Caco-2 (cell line): ENCODE measurements at regions of chr1 and their contacts with region 1.

Region 1: DNA sequence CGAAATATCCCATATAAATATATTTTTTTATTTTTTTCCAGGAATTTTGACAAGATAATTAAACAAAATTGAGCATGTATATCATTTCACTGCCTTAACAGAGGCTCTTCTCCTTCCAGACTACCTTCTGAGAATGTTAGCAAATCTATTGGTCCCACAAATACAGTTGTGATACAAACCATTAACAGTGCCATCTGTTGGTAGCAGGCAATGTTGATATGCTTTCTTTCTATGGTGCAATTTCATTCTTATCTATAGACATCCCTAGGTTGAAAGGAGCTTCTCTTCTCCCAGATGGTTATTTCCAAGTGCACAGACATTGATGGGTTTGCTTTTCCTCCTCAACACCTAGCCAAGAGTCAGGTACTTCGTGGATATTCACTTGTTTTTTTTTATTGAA is 303.6 kb downstream of the USH2A start:
- DNase-seq: peak in 1 of 2 experiments; percentile 36
- H3K4me3 ChIP-seq: no peak overlapping the region
- H3K4me3 Mint-ChIP-seq: no peak overlapping the region
- H3K27ac Mint-ChIP-seq: no peak overlapping the region
- H3K4me1 ChIP-seq: no peaks in the 10 kb centered on the region
- H3K4me1 Mint-ChIP-seq: no peaks in the 10 kb centered on the region
- H3K27me3 ChIP-seq: no peaks in the 10 kb centered on the region
- H3K27me3 Mint-ChIP-seq: no peaks in the 10 kb centered on the region
- CTCF ChIP-seq: peak; percentile 53 to 61

Region 2: DNA sequence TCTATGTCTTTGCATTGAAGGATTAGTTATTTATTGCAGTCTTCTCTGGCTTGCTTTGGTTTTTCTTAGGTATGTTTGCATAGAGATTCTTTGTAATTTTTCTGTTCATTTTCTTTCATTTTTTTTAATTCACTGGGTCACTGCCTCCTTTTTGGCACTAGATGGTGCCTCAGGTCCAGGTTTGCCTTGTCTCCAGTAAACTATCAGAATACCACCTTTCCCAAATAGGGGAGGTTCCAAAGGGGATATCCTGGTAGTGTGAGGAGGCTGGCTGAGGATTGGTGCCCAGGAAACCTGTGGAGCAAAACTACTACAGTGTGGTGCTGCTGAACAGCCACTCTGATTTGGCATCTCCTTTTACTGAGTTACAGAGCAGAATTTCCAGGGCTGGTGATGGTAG is 295.4 kb before region 1 on chr1:
- CTCF ChIA-PET with region 1: no interaction called
- POLR2A ChIA-PET with region 1: interaction called, 3 read pairs
- intact Hi-C with region 1: loop called (anchors 1 kb)
- DNase-seq: peak in 1 of 2 experiments; percentile 24
- H3K4me3 ChIP-seq: no peak overlapping the region
- H3K4me3 Mint-ChIP-seq: no peak overlapping the region
- H3K27ac Mint-ChIP-seq: no peak overlapping the region
- H3K4me1 ChIP-seq: no peaks in the 10 kb centered on the region
- H3K4me1 Mint-ChIP-seq: no peaks in the 10 kb centered on the region
- H3K27me3 ChIP-seq: no peaks in the 10 kb centered on the region
- H3K27me3 Mint-ChIP-seq: no peaks in the 10 kb centered on the region
- CTCF ChIP-seq: peak; percentile 32 to 73

Region 3: DNA sequence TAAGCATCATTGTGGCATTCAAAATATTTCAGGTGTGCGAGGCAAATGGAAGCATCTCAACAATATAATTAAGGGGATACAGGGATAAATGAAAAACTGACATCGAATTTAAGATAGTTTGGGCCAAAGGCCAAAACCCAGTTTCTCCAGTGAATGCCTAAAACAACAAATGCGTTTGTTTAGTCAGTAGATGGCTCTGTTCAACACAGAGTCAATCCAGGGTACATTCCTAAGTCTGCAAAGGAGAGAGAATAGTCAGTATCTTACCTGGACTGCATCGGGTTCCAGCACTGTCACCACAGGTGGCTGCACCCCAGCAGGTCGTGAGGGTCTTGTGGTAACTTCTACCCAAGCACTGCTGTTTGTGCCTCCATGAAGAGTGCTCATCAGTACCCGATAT is 231.4 kb before region 1 on chr1:
- CTCF ChIA-PET with region 1: no interaction called
- POLR2A ChIA-PET with region 1: no interaction called
- intact Hi-C with region 1: loop called (anchors 1 kb)
- DNase-seq: peak in 1 of 2 experiments; percentile 28
- H3K4me3 ChIP-seq: no peak overlapping the region
- H3K4me3 Mint-ChIP-seq: no peak overlapping the region
- H3K27ac Mint-ChIP-seq: no peak overlapping the region
- H3K4me1 ChIP-seq: 0 out of 2 replicates have a peak, but pooled peaks cover 7% of the 10 kb centered on the region
- H3K4me1 Mint-ChIP-seq: peaks cover 7% of the 10 kb centered on the region
- H3K27me3 ChIP-seq: no peaks in the 10 kb centered on the region
- H3K27me3 Mint-ChIP-seq: no peaks in the 10 kb centered on the region
- CTCF ChIP-seq: no peak

Region 4: GRCh38 chr1:215923128-215923824 is 196.3 kb before region 1 on chr1:
- CTCF ChIA-PET with region 1: no interaction called
- POLR2A ChIA-PET with region 1: no interaction called
- intact Hi-C with region 1: no loop called
- DNase-seq: no peak
- H3K4me3 ChIP-seq: no peak overlapping the region
- H3K4me3 Mint-ChIP-seq: no peak overlapping the region
- H3K27ac Mint-ChIP-seq: no peak overlapping the region
- H3K4me1 ChIP-seq: no peaks in the 10 kb centered on the region
- H3K4me1 Mint-ChIP-seq: no peaks in the 10 kb centered on the region
- H3K27me3 ChIP-seq: no peaks in the 10 kb centered on the region
- H3K27me3 Mint-ChIP-seq: no peaks in the 10 kb centered on the region
- CTCF ChIP-seq: no peak

Region 5: GRCh38 chr1:215992620-215993019 is 127.0 kb before region 1 on chr1:
- CTCF ChIA-PET with region 1: no interaction called
- POLR2A ChIA-PET with region 1: no interaction called
- intact Hi-C with region 1: loop called (anchors 1 kb)
- DNase-seq: peak in 1 of 2 experiments; percentile 24
- H3K4me3 ChIP-seq: no peak overlapping the region
- H3K4me3 Mint-ChIP-seq: no peak overlapping the region
- H3K27ac Mint-ChIP-seq: no peak overlapping the region
- H3K4me1 ChIP-seq: no peaks in the 10 kb centered on the region
- H3K4me1 Mint-ChIP-seq: peaks cover 13% of the 10 kb centered on the region
- H3K27me3 ChIP-seq: no peaks in the 10 kb centered on the region
- H3K27me3 Mint-ChIP-seq: no peaks in the 10 kb centered on the region
- CTCF ChIP-seq: peak; percentile 23 to 35

Region 6: GRCh38 chr1:216193839-216194439 is 74.3 kb after region 1 on chr1:
- CTCF ChIA-PET with region 1: interaction called, 4 read pairs
- POLR2A ChIA-PET with region 1: no interaction called
- intact Hi-C with region 1: loop called (anchors 2 kb)
- DNase-seq: peak; percentile 22 to 32
- H3K4me3 ChIP-seq: no peak overlapping the region
- H3K4me3 Mint-ChIP-seq: peak overlapping the region; percentile 27
- H3K27ac Mint-ChIP-seq: no peak overlapping the region
- H3K4me1 ChIP-seq: peaks cover 11% of the 10 kb centered on the region; the same call in 1 of the 2 replicates
- H3K4me1 Mint-ChIP-seq: peaks cover 7% of the 10 kb centered on the region
- H3K27me3 ChIP-seq: no peaks in the 10 kb centered on the region
- H3K27me3 Mint-ChIP-seq: no peaks in the 10 kb centered on the region
- CTCF ChIP-seq: peak; percentile 40 to 41

Region 7: GRCh38 chr1:216566641-216567205 is 447.1 kb after region 1 on chr1:
- CTCF ChIA-PET with region 1: no interaction called
- POLR2A ChIA-PET with region 1: no interaction called
- intact Hi-C with region 1: loop called (anchors 10 kb)
- DNase-seq: peak in 1 of 2 experiments; percentile 14
- H3K4me3 ChIP-seq: no peak overlapping the region
- H3K4me3 Mint-ChIP-seq: no peak overlapping the region
- H3K27ac Mint-ChIP-seq: no peak overlapping the region
- H3K4me1 ChIP-seq: no peaks in the 10 kb centered on the region
- H3K4me1 Mint-ChIP-seq: no peaks in the 10 kb centered on the region
- H3K27me3 ChIP-seq: no peaks in the 10 kb centered on the region
- H3K27me3 Mint-ChIP-seq: no peaks in the 10 kb centered on the region
- CTCF ChIP-seq: peak; percentile 39 to 42